OCI-LY7 (cell line): ENCODE measurements at regions of chr2 and their contacts with region 1.

Region 1: GRCh38 chr2:159807183-159808031 is 9.4 kb upstream of the CD302 start:
- DNase-seq: peak; percentile 47
- H3K4me3 ChIP-seq: no peak overlapping the region
- H3K27ac ChIP-seq: no peak overlapping the region
- H3K4me1 ChIP-seq: no peaks in the 10 kb centered on the region
- CTCF ChIP-seq: peak; percentile 89

Region 2: GRCh38 chr2:158903711-158904443 is 903.5 kb before region 1 on chr2:
- CTCF ChIA-PET with region 1: no interaction called
- POLR2A ChIA-PET with region 1: no interaction called
- intact Hi-C with region 1: loop called (anchors 1 kb)
- DNase-seq: no peak
- H3K4me3 ChIP-seq: no peak overlapping the region
- H3K27ac ChIP-seq: no peak overlapping the region
- H3K4me1 ChIP-seq: no peaks in the 10 kb centered on the region
- CTCF ChIP-seq: no peak

Region 3: DNA sequence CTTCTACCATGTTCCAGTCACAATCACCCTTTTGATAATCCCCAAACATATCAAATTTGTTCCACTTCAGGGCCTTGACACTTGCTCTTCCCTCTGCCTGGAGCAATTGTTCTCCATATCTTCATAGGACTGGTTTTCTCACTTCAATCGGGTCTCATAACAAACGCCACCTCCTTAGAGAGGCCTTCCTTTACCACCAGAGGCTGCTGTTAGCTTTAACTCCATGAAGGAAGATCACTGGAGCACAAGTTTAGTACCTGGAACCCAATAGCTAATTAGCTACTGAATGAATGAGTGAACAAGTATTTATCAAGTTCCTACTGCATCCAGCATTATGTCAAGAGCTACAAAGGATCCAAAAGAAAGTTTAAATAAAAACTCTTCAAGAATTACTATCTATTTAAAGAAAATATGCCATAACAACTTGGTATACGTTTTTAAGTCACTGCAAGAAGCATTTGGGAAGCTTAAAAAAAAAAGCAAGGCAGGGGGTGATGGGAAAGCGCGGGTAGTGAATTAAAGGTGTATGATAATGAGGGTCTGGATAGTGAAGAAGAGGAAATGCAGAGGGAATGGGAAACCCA is 249.9 kb before region 1 on chr2:
- CTCF ChIA-PET with region 1: no interaction called
- POLR2A ChIA-PET with region 1: interaction called, 3 read pairs
- intact Hi-C with region 1: loop called (anchors 10 kb)
- DNase-seq: peak; percentile 6
- H3K4me3 ChIP-seq: no peak overlapping the region
- H3K27ac ChIP-seq: no peak overlapping the region
- H3K4me1 ChIP-seq: no peaks in the 10 kb centered on the region
- CTCF ChIP-seq: peak; percentile 40; the same call in 1 of the 2 replicates

Region 4: GRCh38 chr2:159615140-159615951 is 192.1 kb before region 1 on chr2:
- CTCF ChIA-PET with region 1: no interaction called
- POLR2A ChIA-PET with region 1: no interaction called
- intact Hi-C with region 1: loop called (anchors 5 kb)
- DNase-seq: peak; percentile 19
- H3K4me3 ChIP-seq: peak overlapping the region; percentile 63
- H3K27ac ChIP-seq: no peak overlapping the region
- H3K4me1 ChIP-seq: no peaks in the 10 kb centered on the region
- CTCF ChIP-seq: no peak